Thyroid gland (tissue), 4 donors: ENCODE measurements at regions of chr2 and their contacts with region 1.

Region 1: GRCh38 chr2:158753641-158754611 is 41.2 kb upstream of the DAPL1 start:
- DNase-seq: peak; percentile 71 to 78
- H3K4me3 ChIP-seq: no peak overlapping the region
- H3K27ac ChIP-seq: peak overlapping the region in 2 of 3 donors; percentile 7 to 53
- H3K4me1 ChIP-seq: no peaks in the 10 kb centered on the region
- H3K27me3 ChIP-seq: no peaks in the 10 kb centered on the region
- CTCF ChIP-seq: peak; percentile 74 to 92 (median 86)
- POLR2A ChIP-seq: no peak

Region 2: DNA sequence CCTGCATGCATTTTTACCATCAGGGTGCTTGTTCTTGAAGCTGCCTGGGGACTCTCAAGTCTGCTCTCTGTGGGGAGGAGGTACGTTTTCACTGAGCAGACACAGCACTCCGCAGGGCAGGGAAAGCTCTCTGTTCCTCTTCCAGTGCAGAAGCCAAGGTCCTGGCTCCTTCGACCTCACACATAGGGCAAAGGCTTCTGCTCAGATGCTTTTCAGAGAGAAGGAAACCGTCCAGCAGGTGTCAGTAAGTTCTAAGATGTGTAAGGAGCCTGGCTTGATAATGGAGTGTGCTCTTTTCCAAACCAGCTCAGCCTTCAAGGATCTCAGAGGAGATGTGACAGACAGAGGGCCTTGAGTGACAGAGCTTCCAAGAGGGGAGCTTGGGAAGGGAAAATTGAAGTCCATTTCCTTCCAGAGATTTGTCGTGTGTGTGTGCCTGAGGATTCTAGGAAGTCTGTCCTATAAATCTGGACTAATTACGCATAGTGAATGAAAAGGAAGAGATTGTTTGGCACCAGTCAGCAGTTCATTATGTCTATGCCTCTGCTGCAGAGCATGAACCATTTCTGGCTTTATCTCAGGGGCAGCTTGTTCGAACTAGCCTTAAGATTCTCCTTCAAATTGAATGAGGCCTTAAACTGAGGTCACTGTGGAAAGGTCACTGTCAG is 719.6 kb before region 1 on chr2:
- intact Hi-C with region 1: loop called (anchors 5 kb)
- DNase-seq: peak; percentile 46 to 47
- H3K4me3 ChIP-seq: no peak overlapping the region
- H3K27ac ChIP-seq: no peak overlapping the region
- H3K4me1 ChIP-seq: no peaks in the 10 kb centered on the region
- H3K27me3 ChIP-seq: no peaks in the 10 kb centered on the region
- CTCF ChIP-seq: peak in 4 of 6 experiments; percentile 40 to 67 (median 58)
- POLR2A ChIP-seq: no peak